Activated CD4-positive, alpha-beta memory T cell treated with anti-CD3 and anti-CD28 coated beads for 36 hours (primary cell): ENCODE measurements at regions of chr4 and their contacts with region 1.

Region 1: DNA sequence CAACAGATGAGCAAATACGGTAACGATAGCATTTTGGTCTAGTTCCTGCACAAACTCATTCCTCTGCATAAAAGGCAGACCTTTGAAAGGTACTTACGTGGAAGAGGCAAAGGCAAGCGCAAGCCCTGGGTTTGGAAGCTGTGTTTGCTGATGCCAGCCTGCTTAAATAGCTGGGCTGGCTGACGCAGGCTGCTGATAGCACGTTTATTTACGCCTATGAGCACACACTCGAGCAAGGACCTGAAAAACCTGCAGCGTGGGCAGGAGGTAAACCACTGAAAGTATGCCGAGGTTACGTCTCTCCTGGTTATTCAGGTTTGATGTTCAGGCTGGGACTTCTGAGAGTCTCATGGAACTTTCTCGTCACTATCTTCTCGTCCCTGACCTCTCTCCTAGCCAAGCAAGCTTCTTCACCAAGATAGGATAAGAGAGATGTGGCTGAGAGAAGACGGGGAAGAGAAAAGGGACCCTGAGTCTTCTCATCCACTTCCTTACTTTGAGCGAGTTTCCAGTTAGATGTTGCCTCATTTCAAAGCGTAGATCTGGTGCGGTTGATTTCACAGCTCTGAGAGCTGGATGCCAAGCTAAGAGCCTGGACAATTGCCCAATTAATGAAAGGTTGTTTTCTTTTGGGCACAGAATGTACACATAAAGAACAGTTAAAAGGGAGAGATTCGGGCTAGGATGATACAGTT is at the start of gene HOPX:
- DNase-seq: peak; percentile 88
- H3K4me3 Mint-ChIP-seq: peak within 1 kb of the TSS; percentile 34
- H3K27ac Mint-ChIP-seq: peak within 1 kb of the TSS; percentile 42
- H3K4me1 Mint-ChIP-seq: peaks cover 29% of the 10 kb centered on the region
- H3K27me3 Mint-ChIP-seq: peaks cover 41% of the 10 kb centered on the region
- total RNA-seq, gene HOPX: 124 to 126 TPM

Region 2: DNA sequence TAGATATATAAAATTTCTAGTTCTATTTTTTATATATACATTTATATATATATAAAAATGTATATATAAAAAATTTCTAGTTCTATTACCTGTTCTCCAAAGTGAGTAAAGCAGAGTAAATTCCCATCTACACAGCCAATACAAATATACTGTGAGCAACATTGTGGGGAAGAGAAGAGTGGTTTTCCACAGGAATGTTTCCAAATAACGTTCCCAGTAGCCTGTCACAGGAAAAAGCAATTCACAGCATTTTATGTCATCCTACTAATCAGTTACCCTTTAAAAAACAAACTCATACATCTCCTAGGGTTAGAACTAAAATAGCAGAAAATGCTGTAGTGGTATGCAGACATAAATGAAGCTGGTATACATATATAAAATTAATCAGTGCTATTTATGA is 338.6 kb before region 1 on chr4:
- CTCF ChIA-PET with region 1: no interaction called
- POLR2A ChIA-PET with region 1: no interaction called
- intact Hi-C with region 1: no loop called
- DNase-seq: no peak
- H3K4me3 Mint-ChIP-seq: no peak overlapping the region
- H3K27ac Mint-ChIP-seq: no peak overlapping the region
- H3K4me1 Mint-ChIP-seq: no peaks in the 10 kb centered on the region
- H3K27me3 Mint-ChIP-seq: no peaks in the 10 kb centered on the region

Region 3: DNA sequence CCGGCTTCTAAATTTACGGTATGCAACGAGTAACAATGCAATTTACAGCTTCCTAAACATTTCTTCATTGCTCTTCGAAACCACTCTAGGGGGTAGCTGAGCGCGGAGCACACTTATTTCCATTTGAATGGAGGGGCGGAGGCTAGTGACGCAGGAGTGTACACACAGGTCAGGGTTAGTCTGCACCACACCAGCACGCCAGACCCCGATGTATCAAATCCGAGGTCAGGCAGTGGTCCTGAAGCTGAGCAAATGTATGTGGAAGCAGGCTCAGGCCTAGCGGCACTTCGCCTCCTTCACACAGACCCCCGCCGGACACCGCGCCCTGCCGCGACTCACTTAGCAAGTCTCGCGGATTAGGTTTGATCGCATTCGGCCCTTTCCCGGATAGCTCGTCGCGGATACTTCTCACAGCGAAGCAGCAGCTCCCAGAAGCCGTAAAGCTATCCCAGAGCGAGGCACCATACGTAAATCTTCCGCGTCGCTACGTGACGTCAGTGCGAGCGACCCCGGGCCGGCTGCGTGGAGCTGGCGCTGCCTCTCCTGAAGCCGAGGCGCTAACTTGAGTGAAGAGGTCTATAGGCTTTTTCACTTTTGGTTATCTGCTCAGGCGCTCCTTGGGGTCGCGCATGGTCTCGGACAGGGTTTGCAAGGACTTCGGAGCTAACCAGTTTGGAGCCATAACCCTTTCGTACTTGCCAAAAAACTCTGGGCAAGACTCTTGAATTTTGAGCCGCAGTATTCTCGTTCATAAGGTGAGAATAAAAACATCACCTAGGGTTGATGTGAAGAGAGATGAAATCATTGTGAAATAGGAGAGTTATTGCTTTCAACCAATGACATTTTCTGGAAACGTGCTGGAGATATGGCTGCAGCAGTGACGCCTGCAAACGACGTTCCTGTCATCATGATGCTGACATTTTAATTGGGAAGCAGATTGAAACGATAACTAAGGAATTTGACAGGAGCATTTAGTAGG is 294.0 kb before region 1 on chr4 and contains the start of gene AASDH:
- CTCF ChIA-PET with region 1: no interaction called
- POLR2A ChIA-PET with region 1: no interaction called
- intact Hi-C with region 1: loop called (anchors 5 kb)
- DNase-seq: peak; percentile 97
- H3K4me3 Mint-ChIP-seq: peak within 1 kb of the TSS; percentile 93
- H3K27ac Mint-ChIP-seq: peak within 1 kb of the TSS; percentile 99
- H3K4me1 Mint-ChIP-seq: peaks cover 30% of the 10 kb centered on the region
- H3K27me3 Mint-ChIP-seq: no peaks in the 10 kb centered on the region
- total RNA-seq, gene AASDH: 12.0 to 16.6 TPM

Region 4: GRCh38 chr4:56496241-56496640 is 185.1 kb before region 1 on chr4:
- CTCF ChIA-PET with region 1: no interaction called
- POLR2A ChIA-PET with region 1: no interaction called
- intact Hi-C with region 1: no loop called
- DNase-seq: no peak
- H3K4me3 Mint-ChIP-seq: no peak overlapping the region
- H3K27ac Mint-ChIP-seq: no peak overlapping the region
- H3K4me1 Mint-ChIP-seq: no peaks in the 10 kb centered on the region
- H3K27me3 Mint-ChIP-seq: no peaks in the 10 kb centered on the region

Region 5: DNA sequence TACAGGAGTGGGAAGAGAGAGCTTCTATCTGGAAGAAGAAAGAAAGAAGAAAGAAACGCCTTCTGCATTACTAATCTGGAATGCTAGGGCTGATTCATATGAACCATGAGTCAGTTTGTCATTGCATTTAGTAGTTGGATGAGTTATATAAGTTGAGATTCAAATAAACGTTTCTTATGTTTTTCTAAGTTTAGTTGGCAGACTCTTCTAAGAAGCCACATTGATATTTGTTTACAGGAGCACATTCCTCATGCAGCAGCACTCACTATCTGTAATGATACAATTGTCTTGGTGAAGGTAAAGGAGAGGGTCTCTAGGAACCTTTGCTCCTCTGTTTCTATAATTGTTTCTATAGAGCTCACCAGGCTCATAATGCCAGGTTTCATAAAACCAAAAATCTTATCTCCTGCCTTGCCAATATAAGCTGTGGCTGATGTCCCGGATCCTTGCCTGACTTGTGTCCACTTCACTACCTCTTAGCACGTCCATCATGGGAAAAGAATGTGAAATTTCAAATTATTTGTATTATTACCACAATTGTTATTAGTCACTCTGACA is 39.7 kb before region 1 on chr4:
- CTCF ChIA-PET with region 1: interaction called, 5 read pairs
- POLR2A ChIA-PET with region 1: interaction called, 11 read pairs
- intact Hi-C with region 1: no loop called
- DNase-seq: no peak
- H3K4me3 Mint-ChIP-seq: no peak overlapping the region
- H3K27ac Mint-ChIP-seq: peak overlapping the region; percentile 80
- H3K4me1 Mint-ChIP-seq: peaks cover 32% of the 10 kb centered on the region
- H3K27me3 Mint-ChIP-seq: peaks cover 8% of the 10 kb centered on the region

Region 6: DNA sequence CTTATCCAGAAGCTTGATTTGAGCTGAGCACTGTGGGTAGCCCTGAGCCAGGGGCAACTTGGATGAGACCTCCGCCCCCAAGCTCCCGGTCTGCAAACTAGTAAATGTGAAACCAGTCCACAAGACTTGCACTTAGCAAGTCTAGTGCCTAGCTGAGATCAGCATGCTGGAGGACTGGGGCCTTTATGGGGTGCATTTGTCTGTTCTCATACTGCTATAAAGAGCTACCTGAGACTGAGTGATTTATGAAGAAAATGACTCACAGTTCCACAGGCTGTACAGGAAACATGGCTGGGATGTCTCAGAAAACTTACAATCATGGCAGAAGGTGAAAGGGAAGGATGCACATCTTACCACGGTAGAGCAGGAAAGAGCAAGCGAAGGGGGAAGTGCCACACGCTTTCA is 41.9 kb after region 1 on chr4:
- CTCF ChIA-PET with region 1: interaction called, 3 read pairs
- POLR2A ChIA-PET with region 1: interaction called, 4 read pairs
- intact Hi-C with region 1: loop called (anchors 1 kb)
- DNase-seq: peak; percentile 77
- H3K4me3 Mint-ChIP-seq: peak overlapping the region; percentile 5
- H3K27ac Mint-ChIP-seq: peak overlapping the region; percentile 80
- H3K4me1 Mint-ChIP-seq: peaks cover 23% of the 10 kb centered on the region
- H3K27me3 Mint-ChIP-seq: peaks cover 1% of the 10 kb centered on the region

Region 7: GRCh38 chr4:56742080-56742871 is 61.0 kb after region 1 on chr4:
- CTCF ChIA-PET with region 1: no interaction called
- POLR2A ChIA-PET with region 1: no interaction called
- intact Hi-C with region 1: no loop called
- DNase-seq: no peak
- H3K4me3 Mint-ChIP-seq: no peak overlapping the region
- H3K27ac Mint-ChIP-seq: no peak overlapping the region
- H3K4me1 Mint-ChIP-seq: no peaks in the 10 kb centered on the region
- H3K27me3 Mint-ChIP-seq: no peaks in the 10 kb centered on the region

Region 8: DNA sequence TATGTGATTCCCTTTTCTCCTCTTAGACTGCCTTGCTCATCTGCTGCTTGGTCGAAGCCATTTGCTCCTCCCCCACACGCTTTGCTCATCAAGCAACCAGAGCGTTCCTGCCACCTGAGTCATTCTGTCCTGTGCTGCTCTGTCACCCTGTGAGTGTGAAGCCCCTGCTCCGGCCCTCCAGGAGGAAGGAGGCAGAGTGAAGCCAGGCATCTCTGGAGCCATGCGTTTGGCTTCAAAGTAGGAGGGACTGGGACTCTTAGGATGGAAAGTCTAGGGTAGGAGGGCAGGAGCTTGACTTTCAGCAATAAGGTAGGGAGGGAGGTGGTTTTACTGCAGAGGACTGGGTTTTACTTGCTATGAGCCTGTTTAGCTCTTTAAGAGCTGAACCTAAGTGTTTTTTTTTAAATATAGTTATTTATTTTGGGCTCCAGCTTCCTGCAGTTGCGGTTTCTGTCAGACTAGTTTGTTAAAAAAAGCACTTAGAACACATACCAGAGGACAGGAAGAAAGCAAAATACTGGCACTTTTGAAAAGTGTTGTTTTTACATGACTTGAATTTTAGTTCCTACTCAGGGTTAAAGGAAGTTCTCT is 76.6 kb after region 1 on chr4:
- CTCF ChIA-PET with region 1: no interaction called
- POLR2A ChIA-PET with region 1: no interaction called
- intact Hi-C with region 1: loop called (anchors 1 kb)
- DNase-seq: peak; percentile 90
- H3K4me3 Mint-ChIP-seq: peak overlapping the region; percentile 40
- H3K27ac Mint-ChIP-seq: peak overlapping the region; percentile 87
- H3K4me1 Mint-ChIP-seq: peaks cover 31% of the 10 kb centered on the region
- H3K27me3 Mint-ChIP-seq: peaks cover 3% of the 10 kb centered on the region

Region 9: DNA sequence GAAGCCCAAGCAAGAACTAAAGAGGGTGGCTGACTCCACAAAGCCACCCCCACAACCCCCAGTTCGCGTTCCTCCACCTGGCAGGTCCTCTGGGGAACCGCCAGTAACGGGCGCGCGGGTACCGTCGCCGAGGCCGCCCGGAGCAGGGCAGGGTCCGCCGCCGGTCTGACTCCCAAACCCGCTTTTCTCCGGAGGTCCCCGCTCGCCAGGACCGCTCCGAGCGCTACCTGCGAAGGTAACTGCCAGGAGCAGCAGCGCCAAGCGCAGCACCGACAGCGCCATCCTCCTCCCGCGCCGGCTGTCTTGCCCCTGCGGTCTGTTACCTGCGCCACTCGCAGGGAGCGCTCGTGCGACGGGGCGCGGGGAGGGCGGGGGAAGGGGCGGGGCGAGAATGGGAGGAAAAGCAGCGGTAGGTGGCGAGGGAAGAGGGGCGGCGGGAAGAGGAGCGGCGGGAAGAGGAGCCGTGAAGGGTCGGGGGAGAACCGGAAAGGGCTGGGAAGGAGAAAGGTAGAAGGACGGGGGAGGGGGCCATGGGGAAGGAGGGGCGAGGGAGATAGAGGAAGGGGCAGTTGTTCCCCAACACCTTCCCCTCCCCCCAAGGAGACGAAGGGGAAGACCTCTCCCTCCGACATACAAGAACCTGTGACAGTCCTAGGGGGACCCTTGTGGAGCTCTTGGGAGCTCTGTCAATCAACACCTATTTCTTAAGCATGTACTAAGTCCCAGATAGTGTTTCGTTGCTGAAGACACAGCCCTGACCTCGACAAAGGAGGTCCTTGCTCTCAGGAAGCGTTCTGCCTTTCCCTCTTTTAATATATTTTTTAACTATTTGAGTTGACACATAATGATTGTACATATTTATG is 140.3 kb after region 1 on chr4 and contains the start of gene SPINK2:
- CTCF ChIA-PET with region 1: no interaction called
- POLR2A ChIA-PET with region 1: no interaction called
- intact Hi-C with region 1: loop called (anchors 5 kb)
- DNase-seq: peak; percentile 77
- H3K4me3 Mint-ChIP-seq: peak within 1 kb of the TSS; percentile 61
- H3K27ac Mint-ChIP-seq: no peak within 1 kb of the TSS
- H3K4me1 Mint-ChIP-seq: peaks cover 27% of the 10 kb centered on the region
- H3K27me3 Mint-ChIP-seq: peaks cover 12% of the 10 kb centered on the region
- total RNA-seq, gene SPINK2: 0.51 TPM in 1 of 2 experiments, not detected in the other